Activated CD4-positive, alpha-beta T cell treated with anti-CD3 and anti-CD28 coated beads for 36 hours (primary cell): ENCODE measurements at regions of chr14 and their contacts with region 1.

Region 1: GRCh38 chr14:70907176-70907995 is at the start of gene PCNX1:
- DNase-seq: peak; percentile 93
- ATAC-seq: peak; percentile 73
- H3K4me3 Mint-ChIP-seq: peak within 1 kb of the TSS; percentile 96
- H3K27ac Mint-ChIP-seq: peak within 1 kb of the TSS; percentile 94
- H3K4me1 Mint-ChIP-seq: peaks cover 70% of the 10 kb centered on the region
- H3K27me3 Mint-ChIP-seq: no peaks in the 10 kb centered on the region
- total RNA-seq, gene PCNX1: 38.4 to 57.9 TPM

Region 2: DNA sequence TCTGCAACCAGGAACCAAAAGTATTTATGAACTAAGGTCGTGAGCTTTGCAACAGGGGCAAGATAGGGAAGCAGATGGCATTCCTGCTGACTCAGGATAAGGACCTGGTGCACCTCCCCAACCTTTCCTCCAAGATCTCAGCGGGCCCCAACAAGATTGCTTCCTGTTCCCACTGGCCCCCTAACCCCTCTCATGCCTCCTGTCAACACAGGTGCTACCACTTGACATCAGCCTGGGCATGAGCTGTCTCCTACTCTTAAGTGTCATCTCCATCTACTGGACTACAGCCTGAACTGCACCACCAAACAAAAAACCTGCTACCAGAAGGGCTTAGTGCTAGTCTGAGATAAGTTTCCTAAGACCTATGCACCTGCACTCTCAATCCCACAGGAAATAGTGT is 339.6 kb before region 1 on chr14:
- CTCF ChIA-PET with region 1: no interaction called
- POLR2A ChIA-PET with region 1: no interaction called
- intact Hi-C with region 1: no loop called
- DNase-seq: peak; percentile 41
- ATAC-seq: peak; percentile 63
- H3K4me3 Mint-ChIP-seq: no peak overlapping the region
- H3K27ac Mint-ChIP-seq: no peak overlapping the region
- H3K4me1 Mint-ChIP-seq: peaks cover 17% of the 10 kb centered on the region
- H3K27me3 Mint-ChIP-seq: no peaks in the 10 kb centered on the region

Region 3: GRCh38 chr14:70600382-70601157 is 306.8 kb before region 1 on chr14 and contains the start of gene MED6:
- CTCF ChIA-PET with region 1: no interaction called
- POLR2A ChIA-PET with region 1: no interaction called
- intact Hi-C with region 1: loop called in 1 of 2 experiments (anchors 1 kb)
- DNase-seq: peak; percentile 95
- ATAC-seq: peak; percentile 100
- H3K4me3 Mint-ChIP-seq: peak within 1 kb of the TSS; percentile 100
- H3K27ac Mint-ChIP-seq: peak within 1 kb of the TSS; percentile 96
- H3K4me1 Mint-ChIP-seq: peaks cover 23% of the 10 kb centered on the region
- H3K27me3 Mint-ChIP-seq: peaks cover 4% of the 10 kb centered on the region
- total RNA-seq, gene MED6: 51.2 to 56.1 TPM

Region 4: GRCh38 chr14:70753518-70753953 is 153.8 kb before region 1 on chr14:
- CTCF ChIA-PET with region 1: no interaction called
- POLR2A ChIA-PET with region 1: no interaction called
- intact Hi-C with region 1: no loop called
- DNase-seq: no peak
- ATAC-seq: no peak
- H3K4me3 Mint-ChIP-seq: no peak overlapping the region
- H3K27ac Mint-ChIP-seq: no peak overlapping the region
- H3K4me1 Mint-ChIP-seq: no peaks in the 10 kb centered on the region
- H3K27me3 Mint-ChIP-seq: no peaks in the 10 kb centered on the region

Region 5: DNA sequence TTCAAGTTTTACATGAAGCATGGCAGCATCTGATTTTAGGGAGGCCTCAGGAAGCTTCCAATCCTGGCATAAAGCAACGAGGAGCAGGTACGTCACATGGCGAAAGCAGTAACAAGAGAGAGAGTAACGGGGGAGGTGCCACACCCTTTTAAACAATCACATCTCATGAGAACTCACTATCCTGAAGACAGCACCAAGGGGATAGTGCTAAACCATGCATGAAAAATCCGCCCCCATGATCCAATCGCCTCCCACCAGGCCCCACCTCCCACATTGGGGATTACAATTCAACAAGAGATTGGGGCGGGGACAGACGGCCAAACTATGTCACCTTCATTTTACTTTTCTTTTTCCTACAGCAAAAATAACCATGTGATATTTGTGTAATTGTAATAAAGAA is 90.9 kb before region 1 on chr14:
- CTCF ChIA-PET with region 1: interaction called, 19 read pairs
- POLR2A ChIA-PET with region 1: interaction called, 3 read pairs
- intact Hi-C with region 1: loop called in 1 of 2 experiments (anchors 2 kb)
- DNase-seq: no peak
- ATAC-seq: no peak
- H3K4me3 Mint-ChIP-seq: no peak overlapping the region
- H3K27ac Mint-ChIP-seq: no peak overlapping the region
- H3K4me1 Mint-ChIP-seq: peaks cover 10% of the 10 kb centered on the region
- H3K27me3 Mint-ChIP-seq: peaks cover 15% of the 10 kb centered on the region

Region 6: DNA sequence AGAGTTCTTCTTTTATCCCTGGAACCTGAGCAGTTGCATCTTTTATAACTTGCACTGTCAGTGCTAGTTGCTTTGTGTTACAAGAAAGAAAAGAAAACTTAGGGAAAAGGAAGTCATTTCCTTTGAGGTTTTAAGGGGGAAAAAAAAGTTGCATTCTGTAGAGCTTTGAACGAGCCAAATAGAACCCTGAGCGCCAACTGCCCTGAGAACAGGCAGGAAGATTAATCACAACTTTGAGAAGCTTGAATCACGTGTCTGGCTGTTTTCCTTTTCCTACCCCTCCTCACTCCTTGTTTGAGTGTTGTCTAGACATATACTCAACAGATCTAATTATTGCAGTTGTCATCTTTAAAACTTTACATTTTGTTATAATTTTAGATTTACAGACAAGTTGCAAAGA is 12.4 kb after region 1 on chr14:
- CTCF ChIA-PET with region 1: interaction called, 8 read pairs
- POLR2A ChIA-PET with region 1: interaction called, 7 read pairs
- intact Hi-C with region 1: loop called in 1 of 2 experiments (anchors 1 kb)
- DNase-seq: peak; percentile 38
- ATAC-seq: peak; percentile 35
- H3K4me3 Mint-ChIP-seq: peak overlapping the region; percentile 13
- H3K27ac Mint-ChIP-seq: peak overlapping the region; percentile 68
- H3K4me1 Mint-ChIP-seq: peaks cover 85% of the 10 kb centered on the region
- H3K27me3 Mint-ChIP-seq: no peaks in the 10 kb centered on the region

Region 7: GRCh38 chr14:70955543-70956480 is 48.4 kb after region 1 on chr14:
- CTCF ChIA-PET with region 1: interaction called, 67 read pairs
- POLR2A ChIA-PET with region 1: no interaction called
- intact Hi-C with region 1: loop called (anchors 1 to 2 kb)
- DNase-seq: peak; percentile 59
- ATAC-seq: peak; percentile 71
- H3K4me3 Mint-ChIP-seq: no peak overlapping the region
- H3K27ac Mint-ChIP-seq: no peak overlapping the region
- H3K4me1 Mint-ChIP-seq: peaks cover 37% of the 10 kb centered on the region
- H3K27me3 Mint-ChIP-seq: no peaks in the 10 kb centered on the region